ENCODE measurements at regions of chr11 and their contacts with region 1.

Region 1: GRCh38 chr11:62665075-62665598 is at the starts of genes C11orf98 and CSKMT:
- DNase-seq: peak; percentile 95
- H3K4me3 ChIP-seq: peak within 1 kb of the TSS; percentile 42 to 83 (median 59)
- H3K27ac ChIP-seq: peak within 1 kb of the TSS; percentile 44
- H3K4me1 ChIP-seq: peaks cover 16% of the 10 kb centered on the region
- H3K27me3 ChIP-seq: no peaks in the 10 kb centered on the region
- CTCF ChIP-seq: no peak
- POLR2A ChIP-seq: peak; percentile 100
- total RNA-seq, gene C11orf98: 58.7 and 61.0 TPM in 2 replicates
- total RNA-seq, gene CSKMT: 28.4 and 38.1 TPM in 2 replicates

Region 2: DNA sequence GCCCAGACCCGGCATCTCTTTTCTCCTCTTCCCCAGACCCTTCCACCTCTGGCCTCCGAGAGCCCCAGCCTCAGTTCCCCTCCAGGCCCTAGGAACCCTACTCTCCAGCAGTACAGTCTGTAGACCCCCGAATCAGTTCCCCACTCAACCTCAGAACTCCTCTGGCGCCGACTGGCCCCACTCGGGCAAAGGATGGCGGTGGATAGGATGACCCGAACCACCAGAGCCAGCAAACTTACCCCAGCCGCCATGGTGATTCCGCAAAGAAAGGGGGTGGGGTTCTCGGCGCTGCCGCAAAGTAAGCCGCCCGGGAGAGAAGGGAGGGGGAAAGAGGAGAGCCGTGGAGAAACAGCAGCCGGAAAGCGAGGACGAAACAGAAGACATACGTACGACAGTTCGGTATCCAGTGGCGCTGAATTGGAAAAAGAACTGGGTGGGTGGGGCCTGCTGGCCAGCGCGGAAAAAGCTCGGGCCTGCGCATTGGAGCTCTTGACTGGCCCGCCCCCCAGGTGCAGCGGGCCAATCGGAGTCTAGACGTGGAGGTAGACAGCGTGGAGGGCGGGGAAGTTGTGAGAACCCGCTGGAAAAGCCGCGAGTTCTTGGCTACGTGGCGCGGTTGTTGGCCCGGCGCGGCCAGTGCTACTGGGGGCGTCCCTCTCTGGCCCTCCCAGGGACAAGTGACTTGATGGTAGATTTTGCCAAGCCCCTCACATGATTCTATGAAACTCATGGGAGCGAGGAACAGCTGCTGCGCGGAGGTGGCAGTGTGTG is 91.4 kb before region 1 on chr11 and contains the start of gene EEF1G:
- CTCF ChIA-PET with region 1: interaction called, 3 read pairs
- POLR2A ChIA-PET with region 1: interaction called, 15 read pairs
- dilution Hi-C with region 1: no loop called
- intact Hi-C with region 1: no loop called
- DNase-seq: peak; percentile 100
- H3K4me3 ChIP-seq: peak within 1 kb of the TSS; percentile 51 to 85 (median 70)
- H3K27ac ChIP-seq: peak within 1 kb of the TSS; percentile 99
- H3K4me1 ChIP-seq: peaks cover 59% of the 10 kb centered on the region
- H3K27me3 ChIP-seq: no peaks in the 10 kb centered on the region
- CTCF ChIP-seq: no peak
- POLR2A ChIP-seq: peak; percentile 96
- total RNA-seq, gene EEF1G: 1,341 and 1,345 TPM in 2 replicates

Region 3: DNA sequence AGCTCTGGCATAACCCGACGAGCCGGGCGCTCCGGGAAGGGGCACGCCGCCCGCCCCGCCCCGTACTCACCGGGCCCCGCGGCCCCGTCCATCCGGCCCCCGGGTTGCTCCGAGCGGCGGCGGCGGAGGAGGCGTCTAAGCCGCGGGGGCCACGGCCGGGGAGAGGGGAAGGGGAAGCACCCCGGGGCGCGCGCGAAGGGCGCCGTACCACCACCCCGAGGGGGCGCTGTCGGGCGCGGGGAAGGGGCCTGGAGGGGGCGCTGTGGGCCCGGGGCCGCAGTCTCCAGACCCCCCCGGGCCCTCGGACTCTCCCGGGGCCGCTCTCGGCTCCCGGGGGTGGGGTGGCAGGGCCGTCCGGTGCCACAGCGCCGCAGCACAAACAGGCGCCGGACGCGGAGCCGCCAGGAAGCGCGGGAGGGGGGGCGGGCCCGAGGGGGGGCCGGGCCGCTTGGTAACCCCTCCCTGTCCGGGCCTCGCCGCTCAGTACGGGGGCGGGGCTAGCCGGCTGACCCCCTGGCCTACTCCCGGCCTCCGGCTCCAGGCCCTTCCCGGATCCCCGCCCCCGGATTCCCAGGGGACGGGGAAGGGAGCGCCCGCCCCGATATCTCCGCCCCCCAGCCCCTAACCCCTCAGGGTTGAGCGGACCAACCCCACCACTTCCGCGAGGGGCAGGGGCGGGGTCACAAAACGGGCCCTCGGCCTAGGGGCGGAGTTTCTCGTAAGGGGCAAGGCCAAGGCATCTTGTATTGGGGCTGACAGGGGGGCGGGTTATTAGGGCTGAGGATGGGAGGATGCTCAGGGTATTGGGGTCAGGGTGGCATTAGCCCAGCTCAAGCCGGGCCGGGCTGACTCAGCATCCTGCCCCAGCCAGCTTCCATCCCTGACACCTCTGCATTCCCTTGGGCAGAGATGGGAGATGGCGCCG is 52.5 kb before region 1 on chr11 and contains the starts of genes EML3 and ROM1:
- CTCF ChIA-PET with region 1: interaction called, 7 read pairs
- POLR2A ChIA-PET with region 1: interaction called, 9 read pairs
- dilution Hi-C with region 1: no loop called
- intact Hi-C with region 1: loop called (anchors 1 kb)
- DNase-seq: peak; percentile 80
- H3K4me3 ChIP-seq: peak within 1 kb of the TSS; percentile 61 to 74 (median 67)
- H3K27ac ChIP-seq: peak within 1 kb of the TSS; percentile 30
- H3K4me1 ChIP-seq: peaks cover 22% of the 10 kb centered on the region
- H3K27me3 ChIP-seq: no peaks in the 10 kb centered on the region
- CTCF ChIP-seq: peak; percentile 88 to 89
- POLR2A ChIP-seq: peak; percentile 41
- total RNA-seq, gene EML3: 101 and 110 TPM in 2 replicates
- total RNA-seq, gene ROM1: 8.2 and 8.8 TPM in 2 replicates

Region 4: GRCh38 chr11:62652161-62653006 is 12.8 kb before region 1 on chr11:
- CTCF ChIA-PET with region 1: interaction called, 15 read pairs
- POLR2A ChIA-PET with region 1: interaction called, 71 read pairs
- dilution Hi-C with region 1: no loop called
- intact Hi-C with region 1: loop called (anchors 1 kb)
- DNase-seq: no peak
- H3K4me3 ChIP-seq: peak overlapping the region; percentile 61 to 76 (median 74)
- H3K27ac ChIP-seq: peak overlapping the region; percentile 73
- H3K4me1 ChIP-seq: peaks cover 2% of the 10 kb centered on the region
- H3K27me3 ChIP-seq: no peaks in the 10 kb centered on the region
- CTCF ChIP-seq: no peak
- POLR2A ChIP-seq: no peak

Region 5: DNA sequence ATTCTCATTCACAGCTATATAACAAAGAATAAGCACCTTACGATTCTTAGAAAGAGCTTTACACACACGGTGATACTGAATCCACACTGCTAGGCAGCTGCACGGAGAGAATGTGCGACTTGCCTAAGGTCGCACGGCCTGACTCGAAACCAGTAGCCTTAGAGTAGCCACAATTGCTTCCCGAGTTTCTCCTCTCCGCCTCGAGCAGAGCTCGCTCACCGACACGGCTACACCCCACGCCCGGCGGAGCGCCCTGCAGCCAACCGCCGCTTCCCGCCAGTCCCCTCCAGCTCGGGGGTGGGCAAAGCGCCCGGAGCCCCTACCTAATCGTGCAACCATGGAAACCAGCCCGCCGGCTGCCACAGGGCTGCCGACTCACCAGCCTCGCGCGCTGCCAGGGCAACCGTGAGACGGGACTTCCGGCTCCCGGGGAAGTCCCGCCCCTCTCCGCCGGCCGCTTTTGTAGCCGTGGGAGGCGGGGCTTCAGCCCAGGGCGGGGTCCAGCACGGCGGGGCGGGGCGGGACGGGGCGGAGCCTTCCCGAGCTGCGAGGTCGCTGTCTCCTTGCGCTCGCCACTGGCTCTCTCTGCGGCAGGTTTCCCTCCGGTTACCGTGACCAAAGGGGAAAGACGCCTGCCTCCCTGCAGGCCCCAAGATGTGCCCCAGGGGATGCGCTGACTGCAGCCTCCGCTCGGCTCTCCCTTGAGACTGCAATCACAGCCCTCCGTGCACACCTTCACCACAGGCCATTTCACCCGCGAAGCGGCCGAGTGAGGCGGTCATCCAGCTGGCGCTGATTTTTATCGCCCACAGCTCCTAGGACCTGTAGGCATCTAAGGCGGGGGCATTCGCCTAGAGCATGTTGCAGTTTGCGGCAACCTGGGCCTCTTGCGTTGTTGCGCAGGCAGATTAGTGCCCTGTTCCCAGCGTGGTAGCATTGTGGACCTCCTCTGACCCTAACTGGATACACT is 41.0 kb after region 1 on chr11:
- CTCF ChIA-PET with region 1: interaction called, 3 read pairs
- POLR2A ChIA-PET with region 1: interaction called, 19 read pairs
- dilution Hi-C with region 1: no loop called
- intact Hi-C with region 1: loop called (anchors 5 kb)
- DNase-seq: peak; percentile 95
- H3K4me3 ChIP-seq: peak overlapping the region; percentile 13 to 81 (median 41)
- H3K27ac ChIP-seq: peak overlapping the region; percentile 37
- H3K4me1 ChIP-seq: peaks cover 25% of the 10 kb centered on the region
- H3K27me3 ChIP-seq: no peaks in the 10 kb centered on the region
- CTCF ChIP-seq: no peak
- POLR2A ChIP-seq: peak; percentile 49

Region 6: GRCh38 chr11:62832336-62833234 is 167.4 kb after region 1 on chr11 and contains the start of gene TEX54:
- CTCF ChIA-PET with region 1: no interaction called
- POLR2A ChIA-PET with region 1: no interaction called
- dilution Hi-C with region 1: no loop called
- intact Hi-C with region 1: no loop called
- DNase-seq: no peak
- H3K4me3 ChIP-seq: peak within 1 kb of the TSS; percentile 62 to 82 (median 75)
- H3K27ac ChIP-seq: peak within 1 kb of the TSS; percentile 76
- H3K4me1 ChIP-seq: peaks cover 13% of the 10 kb centered on the region
- H3K27me3 ChIP-seq: no peaks in the 10 kb centered on the region
- CTCF ChIP-seq: no peak
- POLR2A ChIP-seq: no peak
- total RNA-seq, gene TEX54: not detected in 2 replicates

Region 7: GRCh38 chr11:62863687-62864180 is 198.6 kb after region 1 on chr11:
- CTCF ChIA-PET with region 1: no interaction called
- POLR2A ChIA-PET with region 1: no interaction called
- dilution Hi-C with region 1: no loop called
- intact Hi-C with region 1: no loop called
- DNase-seq: no peak
- H3K4me3 ChIP-seq: no peak overlapping the region
- H3K27ac ChIP-seq: no peak overlapping the region
- H3K4me1 ChIP-seq: no peaks in the 10 kb centered on the region
- H3K27me3 ChIP-seq: no peaks in the 10 kb centered on the region
- CTCF ChIP-seq: no peak
- POLR2A ChIP-seq: no peak

Measured in endothelial cell of umbilical vein (primary cell).